H1 (cell line): ENCODE measurements at regions of chr3 and their contacts with region 1.

Region 1: GRCh38 chr3:32947789-32948238 is 3.6 kb upstream of the CCR4 start:
- DNase-seq: peak; percentile 61 to 99
- H3K4me3 ChIP-seq: no peak overlapping the region
- H3K27ac ChIP-seq: no peak overlapping the region
- H3K4me1 ChIP-seq: peaks cover 0 to 4% (median 1%) of the 10 kb centered on the region in 4 experiments; a peak in 2 of 7 replicates
- H3K27me3 ChIP-seq: no peaks in the 10 kb centered on the region
- CTCF ChIP-seq: peak; percentile 67 to 95 (median 90)
- EP300 ChIP-seq: no peak
- POLR2A ChIP-seq: no peak
- RAD21 ChIP-seq: peak; percentile 98

Region 2: GRCh38 chr3:32733631-32734229 is 214.1 kb before region 1 on chr3:
- CTCF ChIA-PET with region 1: no interaction called
- POLR2A ChIA-PET with region 1: no interaction called
- DNase-seq: no peak
- H3K4me3 ChIP-seq: no peak overlapping the region
- H3K27ac ChIP-seq: no peak overlapping the region
- H3K4me1 ChIP-seq: peaks cover 0 to 4% (median 2%) of the 10 kb centered on the region in 4 experiments; a peak in 2 of 7 replicates
- H3K27me3 ChIP-seq: no peaks in the 10 kb centered on the region
- CTCF ChIP-seq: peak in 2 of 3 experiments; percentile 22 to 49; a peak in 2 of 4 replicates
- EP300 ChIP-seq: no peak
- POLR2A ChIP-seq: no peak
- RAD21 ChIP-seq: peak; percentile 63 to 64

Region 3: GRCh38 chr3:32960404-32961170 is 12.8 kb after region 1 on chr3:
- CTCF ChIA-PET with region 1: interaction called, 34 read pairs
- POLR2A ChIA-PET with region 1: no interaction called
- DNase-seq: peak in 1 of 2 experiments; percentile 19
- H3K4me3 ChIP-seq: no peak overlapping the region
- H3K27ac ChIP-seq: no peak overlapping the region
- H3K4me1 ChIP-seq: no peaks in the 10 kb centered on the region; a peak in 2 of 7 replicates
- H3K27me3 ChIP-seq: no peaks in the 10 kb centered on the region
- CTCF ChIP-seq: no peak
- EP300 ChIP-seq: no peak
- POLR2A ChIP-seq: no peak
- RAD21 ChIP-seq: no peak

Region 4: DNA sequence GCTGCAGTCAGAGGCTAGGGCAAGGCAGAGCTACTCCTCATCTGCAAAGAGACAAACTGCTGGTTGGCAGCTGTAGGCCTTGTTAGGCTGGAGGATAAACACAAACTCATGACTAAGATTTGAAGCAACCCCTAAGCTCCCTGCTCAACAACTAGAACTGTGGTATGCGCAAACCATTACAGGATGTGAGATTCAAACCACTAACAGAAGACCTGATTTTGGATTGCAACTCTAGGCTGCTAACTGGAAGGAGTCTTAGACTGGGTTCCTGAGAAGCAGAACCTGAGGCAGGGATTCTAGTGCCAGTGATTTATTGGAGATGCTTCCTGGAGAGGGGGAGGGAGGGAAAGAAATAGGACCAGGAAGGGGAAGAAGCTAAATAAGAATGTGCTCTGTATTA is 26.2 kb after region 1 on chr3:
- CTCF ChIA-PET with region 1: interaction called, 15 read pairs
- POLR2A ChIA-PET with region 1: interaction called, 3 read pairs
- DNase-seq: no peak
- H3K4me3 ChIP-seq: no peak overlapping the region
- H3K27ac ChIP-seq: no peak overlapping the region
- H3K4me1 ChIP-seq: 0 out of 7 replicates have a peak, but pooled peaks cover 0 to 2% (median 0%) of the 10 kb centered on the region in 4 experiments
- H3K27me3 ChIP-seq: no peaks in the 10 kb centered on the region
- CTCF ChIP-seq: no peak
- EP300 ChIP-seq: no peak
- POLR2A ChIP-seq: no peak
- RAD21 ChIP-seq: no peak

Region 5: GRCh38 chr3:32983124-32983523 is 35.3 kb after region 1 on chr3:
- CTCF ChIA-PET with region 1: interaction called, 21 read pairs
- POLR2A ChIA-PET with region 1: no interaction called
- DNase-seq: no peak
- H3K4me3 ChIP-seq: no peak overlapping the region
- H3K27ac ChIP-seq: no peak overlapping the region
- H3K4me1 ChIP-seq: no peaks in the 10 kb centered on the region
- H3K27me3 ChIP-seq: no peaks in the 10 kb centered on the region
- CTCF ChIP-seq: no peak
- EP300 ChIP-seq: no peak
- POLR2A ChIP-seq: no peak
- RAD21 ChIP-seq: no peak

Region 6: GRCh38 chr3:33001889-33002288 is 54.1 kb after region 1 on chr3:
- CTCF ChIA-PET with region 1: interaction called, 34 read pairs
- POLR2A ChIA-PET with region 1: interaction called, 3 read pairs
- DNase-seq: no peak
- H3K4me3 ChIP-seq: no peak overlapping the region
- H3K27ac ChIP-seq: no peak overlapping the region
- H3K4me1 ChIP-seq: peaks cover 2 to 9% (median 5%) of the 10 kb centered on the region in 4 experiments; a peak in 4 of 7 replicates
- H3K27me3 ChIP-seq: no peaks in the 10 kb centered on the region
- CTCF ChIP-seq: no peak
- EP300 ChIP-seq: no peak
- POLR2A ChIP-seq: no peak
- RAD21 ChIP-seq: no peak